PC-3 (cell line): ENCODE measurements at regions of chr12 and their contacts with region 1.

Region 1: GRCh38 chr12:116426391-116427136 is 132.6 kb upstream of the MAP1LC3B2 start:
- DNase-seq: peak; percentile 99
- ATAC-seq: peak; percentile 95
- H3K4me3 ChIP-seq: no peak overlapping the region
- H3K27ac ChIP-seq: peak overlapping the region; percentile 76
- H3K4me1 ChIP-seq: peaks cover 29% of the 10 kb centered on the region
- H3K27me3 ChIP-seq: no peaks in the 10 kb centered on the region
- CTCF ChIP-seq: peak; percentile 71

Region 2: GRCh38 chr12:116382686-116383531 is 43.7 kb before region 1 on chr12:
- CTCF ChIA-PET with region 1: no interaction called
- POLR2A ChIA-PET with region 1: no interaction called
- intact Hi-C with region 1: loop called (anchors 2 kb)
- DNase-seq: peak; percentile 94
- ATAC-seq: peak; percentile 69
- H3K4me3 ChIP-seq: no peak overlapping the region; the same call in 1 of the 2 replicates
- H3K27ac ChIP-seq: peak overlapping the region; percentile 88
- H3K4me1 ChIP-seq: peaks cover 39% of the 10 kb centered on the region
- H3K27me3 ChIP-seq: no peaks in the 10 kb centered on the region
- CTCF ChIP-seq: no peak